B cell (primary cell): ENCODE measurements at regions of chr13 and their contacts with region 1.

Region 1: DNA sequence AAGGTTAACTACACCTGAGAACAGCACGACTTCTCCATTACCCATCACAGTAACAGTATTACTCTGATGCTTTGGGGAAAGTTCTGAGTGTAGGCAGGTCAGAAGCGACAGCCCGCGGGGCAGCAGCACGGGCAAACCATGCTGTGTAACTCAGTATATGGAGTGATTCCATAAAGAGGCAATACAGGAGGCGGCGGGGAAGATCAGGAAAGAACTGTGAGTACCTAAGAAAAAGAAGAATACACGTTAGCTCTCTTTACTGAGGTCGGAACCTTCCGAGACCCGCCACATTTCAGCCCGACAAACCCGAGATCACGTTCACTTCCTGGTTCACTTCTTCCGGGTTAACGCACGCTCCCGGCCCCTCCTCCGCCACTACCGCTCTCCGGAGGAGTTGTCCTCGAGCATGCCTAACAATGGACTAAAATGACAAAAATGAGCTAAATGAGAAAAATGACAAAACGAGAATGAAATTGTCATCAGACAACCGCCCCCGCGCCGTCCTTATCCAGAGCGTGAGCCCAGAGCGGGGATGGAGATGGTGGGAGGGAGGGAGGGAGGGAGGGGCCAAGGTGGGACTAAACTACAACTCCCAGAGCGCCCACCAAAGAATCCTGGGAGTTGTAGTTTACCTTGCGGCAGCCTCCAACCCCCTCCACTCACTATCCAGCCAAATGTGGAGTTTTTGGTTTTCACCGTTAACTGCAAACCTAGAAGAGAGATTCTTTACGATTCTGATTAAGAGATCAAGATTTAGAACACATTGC is at the start of gene MTRF1:
- DNase-seq: peak; percentile 92
- ATAC-seq: peak; percentile 92
- H3K4me3 ChIP-seq: peak within 1 kb of the TSS; percentile 62 to 95 (median 76)
- H3K4me3 Mint-ChIP-seq: peak within 1 kb of the TSS; percentile 96
- H3K27ac ChIP-seq: peak within 1 kb of the TSS; percentile 79 to 92
- H3K27ac Mint-ChIP-seq: peak within 1 kb of the TSS; percentile 98
- H3K4me1 ChIP-seq: peaks cover 6 to 7% of the 10 kb centered on the region in 2 donors
- H3K4me1 Mint-ChIP-seq: peaks cover 21% of the 10 kb centered on the region
- H3K27me3 ChIP-seq: no peaks in the 10 kb centered on the region
- H3K27me3 Mint-ChIP-seq: no peaks in the 10 kb centered on the region
- CTCF ChIP-seq: no peak
- total RNA-seq, gene MTRF1: 29.8 and 36.0 TPM in 2 replicates

Region 2: DNA sequence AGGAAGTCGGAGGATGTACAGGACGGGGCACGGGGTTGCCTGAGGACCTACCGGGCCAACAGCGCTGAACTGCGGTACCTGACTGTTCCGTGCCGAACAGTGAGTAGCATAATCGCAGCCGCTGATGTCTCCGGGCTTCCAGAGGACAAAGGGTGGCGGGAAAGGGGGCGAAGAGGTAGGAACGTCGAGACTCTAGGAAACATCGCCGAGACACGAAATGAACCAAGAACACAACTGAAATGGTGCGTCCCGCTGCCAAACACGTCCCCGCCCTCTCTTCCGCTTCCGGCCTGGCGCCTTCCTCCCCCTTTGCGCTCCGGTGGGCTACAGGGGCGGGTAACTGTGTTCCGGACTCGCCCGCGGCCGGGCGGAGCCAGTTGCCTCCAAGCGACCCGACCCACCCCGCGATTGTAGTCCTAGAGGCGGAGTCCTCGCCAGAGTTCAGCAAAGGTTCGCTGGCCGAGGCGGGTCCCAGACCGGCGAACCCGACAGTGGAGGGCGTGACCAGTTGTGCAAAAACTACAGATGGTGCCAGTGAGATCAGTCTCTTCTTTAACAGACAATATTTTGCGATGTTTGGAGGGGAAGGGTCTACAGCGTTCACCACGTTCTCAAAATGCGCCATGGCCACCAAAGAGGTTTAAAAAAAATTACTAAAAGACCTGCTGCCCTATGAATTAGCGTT is 492.4 kb before region 1 on chr13 and contains the start of gene MRPS31:
- CTCF ChIA-PET with region 1: no interaction called
- POLR2A ChIA-PET with region 1: no interaction called
- intact Hi-C with region 1: loop called (anchors 1 kb)
- DNase-seq: peak; percentile 95
- ATAC-seq: peak; percentile 100
- H3K4me3 ChIP-seq: peak within 1 kb of the TSS; percentile 65 to 99 (median 99)
- H3K4me3 Mint-ChIP-seq: peak within 1 kb of the TSS; percentile 100
- H3K27ac ChIP-seq: peak within 1 kb of the TSS; percentile 64 to 88
- H3K27ac Mint-ChIP-seq: peak within 1 kb of the TSS; percentile 97
- H3K4me1 ChIP-seq: peaks cover 12 to 19% of the 10 kb centered on the region in 2 donors
- H3K4me1 Mint-ChIP-seq: peaks cover 21% of the 10 kb centered on the region
- H3K27me3 ChIP-seq: no peaks in the 10 kb centered on the region
- H3K27me3 Mint-ChIP-seq: no peaks in the 10 kb centered on the region
- CTCF ChIP-seq: no peak
- total RNA-seq, gene MRPS31: 29.7 and 34.4 TPM in 2 replicates

Region 3: DNA sequence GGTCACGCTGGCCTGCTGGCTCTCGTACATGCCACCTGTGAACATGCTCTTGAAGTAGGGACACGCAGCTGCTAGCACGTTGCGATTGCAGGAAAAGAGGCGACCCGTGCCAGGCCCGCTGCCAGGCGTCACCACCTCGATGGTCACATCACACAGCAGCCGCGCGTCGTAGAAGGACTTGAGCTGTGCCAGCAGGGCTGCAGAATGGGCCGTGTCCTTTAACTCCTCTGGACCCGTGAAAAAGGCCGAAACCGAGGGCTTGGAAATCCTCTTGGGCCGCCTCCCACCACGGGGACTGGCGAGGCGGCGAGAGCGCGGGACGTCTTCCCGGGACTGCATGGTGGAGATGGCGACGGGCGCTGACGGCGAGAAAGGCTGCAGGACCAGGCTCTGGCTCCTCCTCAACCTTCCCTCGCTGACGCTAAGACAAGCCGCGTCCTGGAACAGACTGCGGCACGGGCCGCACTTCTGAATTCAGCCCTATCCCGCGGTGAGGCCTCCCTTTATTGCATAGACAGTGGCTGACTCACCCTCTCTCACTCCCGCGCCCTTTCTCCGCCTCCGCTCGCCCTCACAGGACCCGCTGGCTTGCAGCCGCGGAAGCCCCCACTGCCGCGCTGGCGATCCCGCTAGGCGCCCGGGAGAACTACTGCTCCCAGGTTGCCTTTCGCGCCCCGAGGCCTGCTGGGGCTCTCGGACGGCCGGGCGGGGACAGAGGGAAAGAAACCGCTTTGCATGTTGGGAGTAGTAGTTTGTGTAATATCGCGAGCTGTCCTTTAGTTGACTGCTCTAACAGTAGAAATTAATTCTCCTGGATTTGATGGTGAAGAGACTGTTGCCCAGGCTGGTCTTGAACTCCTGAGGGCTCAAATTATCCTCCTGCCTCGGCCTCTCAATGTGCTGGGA is 69.3 kb before region 1 on chr13 and contains the start of gene KBTBD7:
- CTCF ChIA-PET with region 1: no interaction called
- POLR2A ChIA-PET with region 1: no interaction called
- intact Hi-C with region 1: loop called (anchors 1 kb)
- DNase-seq: peak; percentile 90
- ATAC-seq: peak; percentile 94
- H3K4me3 ChIP-seq: peak within 1 kb of the TSS; percentile 59 to 92 (median 88)
- H3K4me3 Mint-ChIP-seq: peak within 1 kb of the TSS; percentile 96
- H3K27ac ChIP-seq: peak within 1 kb of the TSS; percentile 32 to 63
- H3K27ac Mint-ChIP-seq: peak within 1 kb of the TSS; percentile 94
- H3K4me1 ChIP-seq: peaks cover 33 to 34% of the 10 kb centered on the region in 2 donors
- H3K4me1 Mint-ChIP-seq: peaks cover 45% of the 10 kb centered on the region
- H3K27me3 ChIP-seq: no peaks in the 10 kb centered on the region
- H3K27me3 Mint-ChIP-seq: no peaks in the 10 kb centered on the region
- CTCF ChIP-seq: no peak
- total RNA-seq, gene KBTBD7: 8.4 and 9.2 TPM in 2 replicates

Region 4: GRCh38 chr13:41199526-41199925 is 63.9 kb before region 1 on chr13:
- CTCF ChIA-PET with region 1: no interaction called
- POLR2A ChIA-PET with region 1: no interaction called
- intact Hi-C with region 1: loop called (anchors 1 kb)
- DNase-seq: peak; percentile 88
- ATAC-seq: peak; percentile 89
- H3K4me3 ChIP-seq: peak overlapping the region in 2 of 5 experiments; percentile 5 to 47
- H3K4me3 Mint-ChIP-seq: peak overlapping the region; percentile 51
- H3K27ac ChIP-seq: peak overlapping the region; percentile 71 to 100
- H3K27ac Mint-ChIP-seq: peak overlapping the region; percentile 98
- H3K4me1 ChIP-seq: peaks cover 35% of the 10 kb centered on the region in 2 donors
- H3K4me1 Mint-ChIP-seq: peaks cover 42% of the 10 kb centered on the region
- H3K27me3 ChIP-seq: no peaks in the 10 kb centered on the region
- H3K27me3 Mint-ChIP-seq: no peaks in the 10 kb centered on the region
- CTCF ChIP-seq: no peak

Region 5: DNA sequence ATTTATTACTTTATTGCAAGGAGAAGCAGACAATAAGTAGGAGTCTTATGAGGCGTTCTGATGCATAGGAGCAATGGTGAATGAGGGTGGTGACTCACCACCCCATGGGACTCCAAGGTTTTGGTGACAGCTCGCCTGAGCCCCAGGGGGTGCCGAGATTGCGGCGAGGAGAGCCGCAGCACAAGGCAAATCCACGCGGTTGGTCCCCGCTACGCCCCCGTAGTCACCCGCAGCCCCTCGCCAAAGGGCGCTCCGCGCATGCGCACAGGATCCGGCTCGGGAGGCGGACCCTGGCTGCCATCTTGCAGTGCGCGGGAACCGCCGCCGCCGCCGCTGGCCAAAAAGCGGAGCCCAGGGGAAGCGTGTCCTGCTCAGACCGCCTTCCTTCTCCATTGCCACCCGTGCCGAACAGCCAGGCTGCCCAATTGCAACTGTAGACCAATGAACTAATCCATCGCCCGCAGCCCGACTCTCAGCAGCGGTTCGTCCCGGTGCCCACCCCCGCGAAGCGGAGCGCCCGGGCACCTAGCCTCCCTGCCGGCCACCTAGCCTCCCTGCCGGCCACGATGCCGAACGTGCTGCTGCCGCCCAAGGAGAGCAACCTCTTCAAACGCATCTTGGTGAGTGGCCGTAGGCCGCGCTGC is 47.6 kb after region 1 on chr13 and contains the start of gene NAA16:
- CTCF ChIA-PET with region 1: no interaction called
- POLR2A ChIA-PET with region 1: interaction called, 4 read pairs
- intact Hi-C with region 1: loop called (anchors 1 kb)
- DNase-seq: peak; percentile 94
- ATAC-seq: peak; percentile 85
- H3K4me3 ChIP-seq: peak within 1 kb of the TSS; percentile 93 to 100 (median 99)
- H3K4me3 Mint-ChIP-seq: peak within 1 kb of the TSS; percentile 95
- H3K27ac ChIP-seq: peak within 1 kb of the TSS; percentile 80 to 83
- H3K27ac Mint-ChIP-seq: peak within 1 kb of the TSS; percentile 96
- H3K4me1 ChIP-seq: peaks cover 26 to 27% of the 10 kb centered on the region in 2 donors
- H3K4me1 Mint-ChIP-seq: peaks cover 39% of the 10 kb centered on the region
- H3K27me3 ChIP-seq: no peaks in the 10 kb centered on the region
- H3K27me3 Mint-ChIP-seq: no peaks in the 10 kb centered on the region
- CTCF ChIP-seq: no peak
- total RNA-seq, gene NAA16: 32.5 and 33.5 TPM in 2 replicates

Region 6: DNA sequence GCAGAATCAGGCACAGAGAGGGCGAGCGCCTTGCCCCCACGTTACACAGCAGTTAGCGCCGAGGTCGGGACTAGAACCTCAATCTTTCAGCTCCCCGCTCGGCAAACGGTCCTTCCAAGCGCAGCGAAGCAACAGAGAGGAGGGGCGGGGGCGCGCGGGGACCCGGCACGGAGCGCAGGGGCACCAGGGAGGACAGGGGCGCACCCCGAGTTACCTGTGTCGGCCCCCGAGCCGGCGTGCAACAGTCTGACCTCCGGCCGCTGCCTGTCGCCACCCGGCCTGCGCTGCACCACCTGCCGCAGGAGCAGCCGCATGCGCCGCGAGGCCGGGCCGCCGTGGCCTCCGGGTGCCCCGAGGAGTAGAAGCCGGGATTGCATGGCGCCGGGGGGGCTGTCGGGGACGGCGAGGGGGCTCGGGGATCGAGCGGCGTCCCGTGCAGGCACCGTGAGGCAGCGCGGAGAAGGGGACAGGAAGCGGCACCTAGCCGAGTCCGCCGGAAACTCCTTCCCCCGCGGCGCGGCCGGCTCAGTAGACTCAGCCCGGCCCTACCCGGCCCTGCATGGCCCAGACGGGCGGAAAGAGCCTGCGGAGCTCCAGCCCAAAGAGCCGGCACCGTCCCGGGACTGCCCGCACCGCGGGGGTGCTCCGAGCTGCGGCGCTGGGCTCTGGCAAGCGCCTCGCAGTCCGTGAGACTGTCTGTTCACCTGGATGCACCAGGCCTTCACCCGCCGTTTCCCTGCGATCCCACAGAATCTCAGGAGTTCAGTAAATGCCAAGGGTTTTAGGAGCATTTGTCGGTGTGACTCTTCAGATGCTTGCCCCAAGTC is 697.4 kb after region 1 on chr13 and contains the start of gene VWA8:
- CTCF ChIA-PET with region 1: no interaction called
- POLR2A ChIA-PET with region 1: interaction called, 3 read pairs
- intact Hi-C with region 1: loop called (anchors 1 kb)
- DNase-seq: peak; percentile 84
- ATAC-seq: peak; percentile 94
- H3K4me3 ChIP-seq: peak within 1 kb of the TSS; percentile 68 to 85 (median 74)
- H3K4me3 Mint-ChIP-seq: peak within 1 kb of the TSS; percentile 94
- H3K27ac ChIP-seq: peak within 1 kb of the TSS; percentile 54 to 63
- H3K27ac Mint-ChIP-seq: peak within 1 kb of the TSS; percentile 85
- H3K4me1 ChIP-seq: peaks cover 12 to 18% of the 10 kb centered on the region in 2 donors
- H3K4me1 Mint-ChIP-seq: peaks cover 15% of the 10 kb centered on the region
- H3K27me3 ChIP-seq: no peaks in the 10 kb centered on the region
- H3K27me3 Mint-ChIP-seq: peaks cover 13% of the 10 kb centered on the region
- CTCF ChIP-seq: no peak
- total RNA-seq, gene VWA8: 19.7 and 23.1 TPM in 2 replicates

Region 7: DNA sequence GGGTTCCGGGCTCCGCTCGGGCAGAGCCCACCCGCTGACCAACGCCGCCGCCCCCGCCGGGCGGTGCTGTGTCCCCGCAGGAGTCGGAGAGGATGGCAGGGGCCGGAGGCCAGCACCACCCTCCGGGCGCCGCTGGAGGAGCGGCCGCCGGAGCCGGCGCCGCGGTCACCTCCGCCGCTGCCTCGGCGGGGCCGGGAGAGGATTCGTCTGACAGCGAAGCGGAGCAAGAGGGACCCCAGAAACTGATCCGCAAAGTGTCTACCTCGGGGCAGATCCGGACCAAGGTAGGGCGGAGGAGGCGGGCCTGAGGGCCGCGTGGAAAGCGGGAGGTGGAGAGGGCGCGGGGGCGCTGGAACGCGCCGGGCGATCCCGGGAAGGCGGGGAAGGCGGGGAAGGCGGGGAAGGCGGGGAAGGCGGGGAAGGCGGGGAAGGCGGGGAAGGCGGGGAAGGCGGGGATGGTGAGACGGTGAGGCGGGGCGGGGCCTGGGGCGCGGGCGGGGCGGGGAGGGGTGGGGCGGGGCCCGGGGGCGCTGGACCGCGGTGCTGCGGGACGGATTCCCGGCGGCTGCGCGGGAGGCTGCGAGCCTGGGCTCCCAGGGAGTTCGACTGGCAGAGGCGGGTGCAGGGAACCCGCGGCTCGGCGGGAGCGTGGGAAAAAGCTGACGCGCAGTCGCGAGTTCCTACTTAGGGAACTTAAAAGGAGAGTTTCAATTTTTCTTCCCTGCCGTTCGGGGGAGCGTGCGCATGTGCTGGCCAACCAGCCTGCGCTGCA is 785.4 kb after region 1 on chr13:
- CTCF ChIA-PET with region 1: no interaction called
- POLR2A ChIA-PET with region 1: no interaction called
- intact Hi-C with region 1: loop called (anchors 2 kb)
- DNase-seq: peak; percentile 61
- ATAC-seq: peak; percentile 71
- H3K4me3 ChIP-seq: peak overlapping the region; percentile 59 to 79 (median 64)
- H3K4me3 Mint-ChIP-seq: peak overlapping the region; percentile 88
- H3K27ac ChIP-seq: no peak overlapping the region
- H3K27ac Mint-ChIP-seq: peak overlapping the region; percentile 37
- H3K4me1 ChIP-seq: peaks cover 17 to 19% of the 10 kb centered on the region in 2 donors
- H3K4me1 Mint-ChIP-seq: peaks cover 10% of the 10 kb centered on the region
- H3K27me3 ChIP-seq: peaks cover 0 to 35% (median 28%) of the 10 kb centered on the region in 4 experiments
- H3K27me3 Mint-ChIP-seq: peaks cover 39% of the 10 kb centered on the region
- CTCF ChIP-seq: no peak

Region 8: DNA sequence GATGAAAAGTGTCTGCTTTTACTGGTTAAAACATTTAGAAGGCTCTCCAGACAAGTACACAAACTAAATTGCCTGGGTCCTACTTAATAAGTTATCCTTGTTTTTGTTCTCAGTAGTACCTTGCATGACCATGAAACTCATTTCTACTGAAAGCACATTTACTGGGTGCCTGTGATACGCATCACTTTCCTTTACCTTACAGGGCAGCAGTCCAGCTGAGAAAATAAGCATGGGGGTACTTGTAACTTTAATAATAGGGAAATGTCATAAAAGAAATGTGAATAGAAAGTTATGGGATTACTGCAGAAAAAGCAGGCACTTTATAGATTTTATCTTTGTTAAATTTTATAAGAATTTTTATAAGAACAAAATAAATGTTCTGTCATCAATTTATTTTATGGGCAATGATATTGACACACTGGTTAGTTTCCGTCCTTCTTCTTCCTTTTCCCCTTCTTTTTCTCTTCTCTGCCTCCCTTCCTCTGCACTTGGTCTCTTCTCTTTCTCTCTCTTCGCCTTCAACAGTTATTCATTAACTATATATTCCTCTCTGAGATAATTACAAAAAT is 901.2 kb after region 1 on chr13:
- CTCF ChIA-PET with region 1: no interaction called
- POLR2A ChIA-PET with region 1: no interaction called
- intact Hi-C with region 1: no loop called
- DNase-seq: no peak
- ATAC-seq: no peak
- H3K4me3 ChIP-seq: no peak overlapping the region
- H3K4me3 Mint-ChIP-seq: no peak overlapping the region
- H3K27ac ChIP-seq: no peak overlapping the region
- H3K27ac Mint-ChIP-seq: no peak overlapping the region
- H3K4me1 ChIP-seq: no peaks in the 10 kb centered on the region
- H3K4me1 Mint-ChIP-seq: no peaks in the 10 kb centered on the region
- H3K27me3 ChIP-seq: no peaks in the 10 kb centered on the region
- H3K27me3 Mint-ChIP-seq: no peaks in the 10 kb centered on the region
- CTCF ChIP-seq: no peak